PC-9 (cell line): ENCODE measurements at regions of chr22 and their contacts with region 1.

Region 1: GRCh38 chr22:50530877-50531545 is 1.2 kb upstream of the TYMP start:
- DNase-seq: peak; percentile 71
- H3K4me3 ChIP-seq: peak overlapping the region; percentile 87
- H3K27ac ChIP-seq: peak overlapping the region; percentile 60
- H3K4me1 ChIP-seq: peaks cover 26% of the 10 kb centered on the region
- H3K27me3 ChIP-seq: no peaks in the 10 kb centered on the region
- CTCF ChIP-seq: no peak

Region 2: GRCh38 chr22:50544078-50544745 is 13.2 kb after region 1 on chr22:
- CTCF ChIA-PET with region 1: interaction called, 5 read pairs
- POLR2A ChIA-PET with region 1: interaction called, 4 read pairs
- intact Hi-C with region 1: loop called (anchors 1 kb)
- DNase-seq: peak; percentile 74 to 82
- H3K4me3 ChIP-seq: peak overlapping the region; percentile 30; the same call in 1 of the 2 replicates
- H3K27ac ChIP-seq: peak overlapping the region; percentile 75
- H3K4me1 ChIP-seq: peaks cover 67% of the 10 kb centered on the region
- H3K27me3 ChIP-seq: no peaks in the 10 kb centered on the region
- CTCF ChIP-seq: peak; percentile 72

Region 3: DNA sequence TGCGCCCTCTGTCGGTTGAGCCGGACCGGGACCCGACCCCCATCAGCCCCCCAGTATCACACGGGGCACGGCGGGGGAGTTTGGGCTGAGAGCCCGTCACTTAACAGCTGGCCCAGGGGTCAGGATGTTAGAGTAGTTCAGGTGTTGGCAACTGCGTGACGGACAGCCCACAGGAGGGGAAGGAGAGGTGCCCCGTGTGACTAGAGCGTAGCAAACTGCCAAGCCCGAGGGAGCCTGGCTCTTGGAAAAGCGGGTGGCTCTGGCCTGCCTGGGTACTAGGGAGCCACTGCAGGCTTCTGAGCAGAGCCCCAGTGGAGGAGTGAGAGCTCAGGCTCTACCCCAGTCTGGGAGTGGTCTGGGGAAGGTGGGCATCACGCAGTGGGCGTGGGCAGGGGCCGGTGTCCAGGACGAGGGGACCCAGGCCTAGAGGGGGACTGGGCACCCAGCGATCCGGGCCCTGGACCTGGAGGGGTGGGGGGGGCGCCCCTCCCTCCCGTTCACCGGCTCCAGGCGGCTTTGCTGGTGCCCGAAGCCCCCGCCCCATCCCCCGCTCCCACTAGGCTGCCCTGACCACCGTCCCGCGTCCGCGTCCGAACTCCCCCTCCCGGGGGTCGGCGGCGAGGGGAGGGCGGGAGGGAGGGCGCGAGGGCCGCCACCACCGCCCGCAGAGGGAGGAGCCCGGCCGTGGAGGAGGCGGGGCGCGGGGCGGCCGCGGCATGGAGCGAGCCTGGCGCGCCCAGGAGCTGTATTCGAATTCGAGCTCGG is 166.0 kb after region 1 on chr22:
- CTCF ChIA-PET with region 1: no interaction called
- POLR2A ChIA-PET with region 1: no interaction called
- intact Hi-C with region 1: no loop called
- DNase-seq: peak in 1 of 2 experiments; percentile 27
- H3K4me3 ChIP-seq: peak overlapping the region; percentile 29; the same call in 1 of the 2 replicates
- H3K27ac ChIP-seq: no peak overlapping the region
- H3K4me1 ChIP-seq: 0 out of 2 replicates have a peak, but pooled peaks cover 4% of the 10 kb centered on the region
- H3K27me3 ChIP-seq: no peaks in the 10 kb centered on the region
- CTCF ChIP-seq: no peak